ENCODE measurements at regions of chr10 and their contacts with region 1.

Region 1: DNA sequence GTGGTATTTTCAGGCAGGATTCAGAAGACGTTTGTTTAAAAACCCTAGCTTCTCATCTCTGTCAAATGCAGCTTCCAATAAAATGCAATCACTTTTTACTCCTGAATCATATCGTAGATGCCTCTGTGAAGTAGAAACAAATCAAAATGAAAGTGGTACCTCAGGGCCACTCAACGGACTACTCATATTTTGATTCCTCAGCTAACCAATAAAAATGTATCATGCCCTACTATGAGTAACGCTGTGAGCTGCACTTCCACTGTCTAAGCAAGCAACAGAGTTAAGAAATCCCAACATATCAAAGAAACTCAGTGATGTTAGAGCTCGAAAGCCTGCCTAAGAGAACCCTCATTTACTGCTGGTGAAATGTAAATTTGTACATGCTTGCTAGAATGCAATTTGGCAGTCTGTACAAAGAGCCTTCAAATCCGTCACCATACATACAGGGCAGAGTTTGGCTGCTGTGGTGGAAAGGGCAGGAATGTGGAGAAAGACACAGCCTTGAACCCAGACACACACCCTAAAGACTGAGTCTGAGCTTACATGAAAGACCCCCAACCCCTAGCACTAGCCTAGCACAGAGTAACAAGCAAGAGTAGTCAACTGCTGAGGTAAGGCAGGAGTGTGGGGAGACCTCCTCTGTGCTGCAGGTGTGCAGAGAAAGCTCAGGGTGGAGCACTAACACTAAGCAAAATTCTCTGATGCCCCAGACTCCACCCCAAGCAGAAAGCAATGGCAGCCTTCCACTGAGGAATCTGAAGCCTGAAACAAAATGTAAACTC is 151.5 kb downstream of the ANK3 start:
- DNase-seq: peak in 1 of 2 donors; percentile 22
- ATAC-seq: peak; percentile 53 to 86 (median 76)
- H3K4me3 ChIP-seq: peak overlapping the region in 2 of 10 donors; percentile 19 to 25
- H3K27ac ChIP-seq: peak overlapping the region in 9 of 10 donors; percentile 18 to 81 (median 74)
- H3K4me1 ChIP-seq: peaks cover 0 to 41% (median 14%) of the 10 kb centered on the region in 9 donors
- H3K27me3 ChIP-seq: no peaks in the 10 kb centered on the region
- CTCF ChIP-seq: peak in 7 of 9 donors; percentile 11 to 54 (median 35)

Region 2: GRCh38 chr10:59872892-59873463 is 365.2 kb before region 1 on chr10:
- intact Hi-C with region 1: no loop called
- DNase-seq: peak in 1 of 2 donors; percentile 41
- ATAC-seq: peak in 7 of 8 donors; percentile 50 to 83 (median 77)
- H3K4me3 ChIP-seq: peak overlapping the region in 5 of 10 donors; percentile 1 to 25 (median 8)
- H3K27ac ChIP-seq: peak overlapping the region in 2 of 10 donors; percentile 22 to 46
- H3K4me1 ChIP-seq: peaks cover 0 to 46% (median 30%) of the 10 kb centered on the region in 9 donors
- H3K27me3 ChIP-seq: no peaks in the 10 kb centered on the region
- CTCF ChIP-seq: no peak

Region 3: DNA sequence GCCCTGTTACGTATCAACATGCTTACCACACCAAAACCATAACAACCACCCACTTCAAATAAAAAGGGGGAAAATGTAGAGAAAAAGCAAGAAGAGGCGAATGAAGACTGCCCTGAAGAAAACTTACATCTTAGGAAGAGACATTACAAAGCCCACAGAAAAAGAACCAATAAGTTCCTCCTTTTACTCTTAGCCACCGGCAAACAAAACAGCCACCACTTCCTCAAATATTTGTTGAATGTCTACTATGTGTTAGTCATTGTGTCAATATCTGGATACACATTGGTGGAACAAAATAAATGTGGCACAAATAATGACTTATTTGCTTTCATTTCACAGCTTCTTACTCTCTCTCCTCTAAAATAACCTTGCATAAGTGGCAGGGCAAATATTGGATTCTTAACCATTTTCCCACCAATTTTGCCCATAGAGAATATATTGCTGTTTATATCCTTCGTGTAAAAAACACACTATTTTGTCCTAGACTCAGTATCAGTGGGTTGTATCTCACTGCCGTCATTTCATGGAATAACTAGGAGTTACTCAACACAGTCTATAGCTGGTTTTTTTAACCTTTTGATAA is 44.7 kb after region 1 on chr10:
- intact Hi-C with region 1: loop called in 1 of 10 experiments (anchors 5 kb)
- DNase-seq: no peak
- ATAC-seq: no peak
- H3K4me3 ChIP-seq: no peak overlapping the region
- H3K27ac ChIP-seq: peak overlapping the region; percentile 23 to 81 (median 62)
- H3K4me1 ChIP-seq: peaks cover 0 to 63% (median 22%) of the 10 kb centered on the region in 9 donors
- H3K27me3 ChIP-seq: no peaks in the 10 kb centered on the region
- CTCF ChIP-seq: no peak